Left cardiac atrium (tissue), 4 donors: ENCODE measurements at regions of chr2 and their contacts with region 1.

Region 1: DNA sequence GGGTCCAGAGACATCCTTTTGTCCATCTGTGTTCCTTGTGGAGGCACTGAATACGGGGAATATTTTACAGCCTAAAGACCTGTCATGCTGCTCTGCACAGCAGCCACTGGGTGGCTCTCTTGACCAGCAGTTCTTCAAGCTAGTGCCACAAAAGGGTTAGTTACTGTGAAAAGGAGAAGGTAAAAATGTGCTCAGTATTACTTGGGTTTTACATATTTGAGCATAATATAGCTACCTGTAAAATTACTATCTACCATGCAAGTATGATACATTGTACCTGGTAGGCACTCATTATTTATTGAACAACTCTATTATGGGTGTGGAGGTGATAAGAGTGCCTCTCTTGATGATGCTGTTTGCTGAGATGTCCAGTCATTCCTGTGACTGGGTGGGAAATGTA is 23.6 kb downstream of the FZD5 start:
- DNase-seq: peak; percentile 40
- ATAC-seq: peak; percentile 68 to 92

Region 2: DNA sequence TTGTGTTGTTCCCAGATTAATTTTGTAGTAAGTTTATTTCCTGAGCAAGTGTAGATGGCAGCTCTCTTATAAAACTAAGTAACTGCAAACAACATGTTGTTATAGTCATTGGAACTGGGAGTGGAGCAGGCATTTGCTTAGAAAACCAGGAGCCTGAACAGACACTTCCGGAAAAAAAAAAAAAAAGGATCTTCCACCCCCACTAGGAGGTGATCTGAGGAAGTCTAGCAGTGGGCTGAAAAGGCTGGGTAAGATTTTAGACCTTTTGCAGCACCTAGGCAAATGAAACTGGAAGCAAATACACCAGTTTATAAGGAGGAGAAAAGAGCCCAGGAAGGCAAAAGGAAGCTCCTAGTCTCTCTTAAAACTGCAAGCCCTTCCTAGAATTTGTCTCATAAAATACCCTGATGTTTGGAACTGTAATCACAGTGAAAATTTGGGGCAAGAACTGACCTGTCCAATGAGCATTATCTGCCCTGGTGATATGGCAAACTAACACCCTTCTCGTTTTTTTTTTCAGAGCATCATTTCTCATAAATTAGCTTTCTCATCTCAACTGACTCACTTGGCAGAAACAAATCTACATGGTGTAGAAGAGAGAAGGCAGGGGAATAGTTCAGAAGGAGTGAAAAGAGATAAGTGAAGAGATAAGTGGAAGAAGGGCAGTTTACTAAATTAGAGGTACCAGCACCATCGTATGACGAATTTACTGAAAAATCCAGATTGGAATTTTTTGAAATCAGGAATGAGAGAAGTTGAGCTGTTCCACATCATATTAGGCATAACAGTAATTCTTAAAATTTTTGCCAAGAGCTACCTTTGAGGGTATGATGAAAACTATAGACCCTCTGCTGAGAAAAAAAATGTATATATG is 39.0 kb before region 1 on chr2:
- intact Hi-C with region 1: no loop called
- DNase-seq: no peak
- ATAC-seq: peak in 1 of 2 donors; percentile 6

Region 3: DNA sequence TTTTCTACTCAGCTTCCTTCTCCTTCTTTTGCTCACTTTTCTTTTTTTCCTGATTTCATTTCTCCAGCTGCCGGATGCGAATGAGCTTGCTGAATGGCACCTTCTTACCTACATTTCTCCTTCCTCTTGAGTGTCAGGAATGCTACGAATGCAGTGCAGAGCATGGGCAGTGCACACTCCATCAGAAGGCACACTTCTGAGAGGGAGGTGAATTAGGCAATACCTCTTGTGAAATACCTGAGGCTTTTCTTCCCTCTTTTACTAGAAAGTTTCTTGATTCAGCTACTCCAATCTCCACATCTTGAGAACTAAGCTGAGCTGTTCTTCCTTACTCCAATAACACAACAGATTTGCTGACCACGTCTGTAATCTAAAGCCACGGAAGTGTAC is 228.1 kb after region 1 on chr2:
- intact Hi-C with region 1: loop called in 1 of 2 experiments (anchors 5 kb)
- DNase-seq: no peak
- ATAC-seq: peak in 1 of 2 donors; percentile 85

Region 4: DNA sequence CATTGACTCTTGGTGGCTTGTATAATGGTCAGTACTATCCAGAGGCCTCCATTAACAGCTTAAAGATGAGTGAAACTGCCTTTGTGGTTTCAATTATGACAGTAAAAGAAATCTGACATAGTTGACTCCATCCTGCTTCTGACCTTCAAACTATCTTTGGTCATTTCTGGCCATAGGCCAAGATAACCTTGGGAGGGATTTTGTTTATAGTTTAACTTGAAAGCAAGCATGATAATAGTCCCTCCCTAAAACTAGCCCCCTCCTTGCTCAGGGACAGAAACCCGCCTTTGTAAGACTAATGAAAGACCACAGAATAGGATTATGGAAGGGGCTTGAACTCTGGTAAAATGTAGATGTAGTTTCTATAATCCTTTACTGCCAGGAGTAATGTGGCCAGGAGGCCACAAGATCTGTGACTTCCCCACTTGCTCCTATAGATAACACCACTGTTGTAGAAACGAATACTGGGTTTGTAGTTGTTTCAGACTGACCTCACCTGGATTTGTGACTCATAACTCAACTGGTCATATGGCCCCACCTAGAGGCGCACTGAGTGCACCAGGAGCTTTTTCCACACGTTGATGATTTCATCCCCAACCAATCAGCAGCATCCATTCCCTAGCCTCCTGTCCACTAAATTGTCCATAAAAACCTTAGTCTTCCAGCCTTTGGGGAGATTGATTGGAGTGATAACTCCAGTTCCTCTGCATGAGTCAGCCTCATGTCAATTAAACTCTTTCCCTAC is 287.8 kb after region 1 on chr2:
- intact Hi-C with region 1: loop called in 1 of 2 experiments (anchors 5 kb)
- DNase-seq: no peak
- ATAC-seq: peak; percentile 65 to 74

Region 5: DNA sequence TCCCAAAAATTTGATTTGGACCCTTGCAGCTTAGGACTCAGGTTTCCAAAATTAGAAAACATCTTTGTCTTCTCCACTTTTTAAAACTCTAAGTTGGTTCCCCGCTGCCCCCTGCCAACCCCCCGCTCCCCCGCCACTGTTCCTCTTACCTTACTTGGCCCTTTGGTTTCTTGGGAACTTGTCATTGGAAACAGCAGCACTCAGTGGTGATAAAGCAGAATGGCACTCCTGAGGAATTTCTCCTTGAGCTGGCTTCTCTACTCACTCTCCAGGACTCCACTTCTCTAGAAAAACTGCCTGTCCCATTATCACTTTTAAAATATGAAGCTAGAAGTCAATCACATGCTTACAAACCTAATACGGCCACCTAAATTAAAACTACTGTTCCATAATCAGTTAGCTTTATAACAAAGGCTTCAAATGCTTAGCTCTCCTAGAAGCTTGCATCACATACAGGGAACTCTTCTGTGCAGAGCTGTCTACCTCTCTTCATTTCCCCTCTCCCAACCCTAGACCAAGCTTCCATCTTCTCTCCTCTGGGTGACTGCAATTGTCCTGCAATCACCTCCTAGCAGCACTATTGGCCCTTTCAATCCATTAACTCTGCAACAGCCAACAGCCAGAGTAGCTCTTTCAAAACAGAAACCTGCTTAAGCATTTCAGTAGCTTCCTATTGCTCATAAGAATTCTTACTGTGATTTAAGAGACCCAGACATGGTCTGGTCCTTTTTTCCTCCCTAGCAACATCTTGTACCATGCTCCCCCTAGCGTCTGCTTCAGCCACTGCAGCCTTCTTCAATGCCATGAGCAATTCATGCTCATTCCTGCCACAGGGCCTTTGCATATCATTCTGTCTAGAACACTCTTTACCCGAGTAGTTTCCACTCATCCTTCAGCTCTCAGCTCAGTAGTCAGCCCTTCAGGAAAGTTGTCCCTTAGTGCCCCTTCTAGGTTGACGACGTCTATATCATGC is 294.4 kb after region 1 on chr2:
- intact Hi-C with region 1: loop called in 1 of 2 experiments (anchors 10 kb)
- DNase-seq: peak; percentile 62
- ATAC-seq: peak; percentile 69 to 76

Region 6: GRCh38 chr2:208072250-208072892 is 326.2 kb after region 1 on chr2:
- intact Hi-C with region 1: loop called (anchors 5 to 10 kb)
- DNase-seq: peak; percentile 51
- ATAC-seq: peak; percentile 78 to 85